Naive thymus-derived CD4-positive, alpha-beta T cell (primary cell): ENCODE measurements at regions of chr1 and their contacts with region 1.

Region 1: GRCh38 chr1:24970399-24970753 is 40.3 kb upstream of the RUNX3 start:
- DNase-seq: no peak
- ATAC-seq: no peak
- H3K4me3 ChIP-seq: no peak overlapping the region
- H3K4me3 Mint-ChIP-seq: peak overlapping the region in 9 of 10 donors; percentile 5 to 78 (median 59)
- H3K27ac ChIP-seq: peak overlapping the region; percentile 35
- H3K27ac Mint-ChIP-seq: peak overlapping the region; percentile 14 to 97 (median 85)
- H3K4me1 ChIP-seq: peaks cover 23 to 47% of the 10 kb centered on the region in 2 donors
- H3K4me1 Mint-ChIP-seq: peaks cover 31 to 81% (median 66%) of the 10 kb centered on the region in 7 donors
- H3K27me3 ChIP-seq: no peaks in the 10 kb centered on the region
- H3K27me3 Mint-ChIP-seq: no peaks in the 10 kb centered on the region

Region 2: GRCh38 chr1:24981631-24982005 is 11.2 kb after region 1 on chr1:
- CTCF ChIA-PET with region 1: interaction called, 4 read pairs
- POLR2A ChIA-PET with region 1: interaction called, 22 read pairs
- intact Hi-C with region 1: loop called (anchors 1 to 2 kb)
- DNase-seq: peak in 3 of 9 donors; percentile 30 to 50 (median 43)
- ATAC-seq: peak; percentile 66
- H3K4me3 ChIP-seq: no peak overlapping the region
- H3K4me3 Mint-ChIP-seq: peak overlapping the region; percentile 49 to 79 (median 60)
- H3K27ac ChIP-seq: peak overlapping the region; percentile 54
- H3K27ac Mint-ChIP-seq: peak overlapping the region; percentile 7 to 92 (median 84)
- H3K4me1 ChIP-seq: peaks cover 47 to 81% of the 10 kb centered on the region in 2 donors
- H3K4me1 Mint-ChIP-seq: peaks cover 78 to 94% (median 92%) of the 10 kb centered on the region in 7 donors
- H3K27me3 ChIP-seq: no peaks in the 10 kb centered on the region
- H3K27me3 Mint-ChIP-seq: no peaks in the 10 kb centered on the region

Region 3: GRCh38 chr1:24987875-24988557 is 17.6 kb after region 1 on chr1:
- CTCF ChIA-PET with region 1: interaction called, 5 read pairs
- POLR2A ChIA-PET with region 1: interaction called, 58 read pairs
- intact Hi-C with region 1: loop called (anchors 1 to 2 kb)
- DNase-seq: no peak
- ATAC-seq: peak; percentile 78
- H3K4me3 ChIP-seq: no peak overlapping the region
- H3K4me3 Mint-ChIP-seq: peak overlapping the region in 8 of 10 donors; percentile 6 to 80 (median 58)
- H3K27ac ChIP-seq: no peak overlapping the region
- H3K27ac Mint-ChIP-seq: peak overlapping the region; percentile 49 to 100 (median 81)
- H3K4me1 ChIP-seq: peaks cover 66 to 96% of the 10 kb centered on the region in 2 donors
- H3K4me1 Mint-ChIP-seq: peaks cover 78 to 99% (median 92%) of the 10 kb centered on the region in 7 donors
- H3K27me3 ChIP-seq: no peaks in the 10 kb centered on the region
- H3K27me3 Mint-ChIP-seq: peaks cover 0 to 10% (median 0%) of the 10 kb centered on the region in 5 donors

Region 4: DNA sequence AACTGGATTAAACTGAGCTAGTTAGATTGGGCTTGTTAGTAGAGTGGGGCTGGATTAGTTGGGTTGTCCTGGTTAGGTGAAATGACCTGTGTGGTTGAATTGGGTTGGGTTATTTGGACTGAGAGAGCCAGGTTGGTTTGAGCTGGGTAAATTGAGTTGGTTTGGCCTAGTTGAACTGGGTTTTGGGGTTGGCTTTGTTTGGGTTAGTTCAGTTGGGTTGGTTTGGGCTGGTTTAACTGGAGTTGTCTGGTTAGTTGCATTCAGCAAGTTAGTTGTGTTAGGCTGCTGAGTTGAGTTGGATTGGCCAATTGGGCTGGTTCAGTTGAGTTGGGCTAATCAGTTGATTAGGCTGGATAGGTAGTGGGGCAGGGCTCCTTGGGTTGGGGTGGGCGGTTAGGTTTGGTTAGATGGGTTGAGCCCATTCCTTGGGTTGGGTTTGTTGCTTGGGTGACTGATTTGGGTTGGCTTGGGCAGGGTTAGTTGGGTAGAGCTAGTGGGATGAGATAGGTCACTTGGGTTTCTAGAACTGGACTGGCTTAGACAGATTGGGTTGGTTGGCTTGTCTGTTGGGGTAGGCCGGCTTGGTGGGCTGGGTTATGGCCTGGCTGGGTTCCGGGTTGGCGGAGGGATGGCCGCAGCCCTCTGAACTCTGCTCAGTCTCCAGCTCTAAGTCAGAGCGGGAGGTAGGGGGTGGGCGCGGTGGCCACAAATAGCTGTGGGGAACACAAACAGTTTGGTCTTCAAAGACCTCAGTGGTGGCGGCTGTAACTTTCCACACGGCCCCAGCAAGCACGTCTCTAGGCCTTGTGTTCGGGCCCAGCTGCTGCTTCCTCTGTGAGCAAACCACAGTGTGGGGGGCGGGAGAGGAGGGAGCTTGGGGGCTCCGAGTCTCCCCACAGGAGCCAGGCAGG is 26.9 kb after region 1 on chr1:
- CTCF ChIA-PET with region 1: interaction called, 5 read pairs
- POLR2A ChIA-PET with region 1: interaction called, 58 read pairs
- intact Hi-C with region 1: loop called (anchors 1 to 2 kb)
- DNase-seq: no peak
- ATAC-seq: peak; percentile 52
- H3K4me3 ChIP-seq: peak overlapping the region; percentile 0
- H3K4me3 Mint-ChIP-seq: peak overlapping the region; percentile 10 to 95 (median 55)
- H3K27ac ChIP-seq: peak overlapping the region; percentile 29
- H3K27ac Mint-ChIP-seq: peak overlapping the region; percentile 67 to 100 (median 86)
- H3K4me1 ChIP-seq: peaks cover 56 to 69% of the 10 kb centered on the region in 2 donors
- H3K4me1 Mint-ChIP-seq: peaks cover 44 to 84% (median 76%) of the 10 kb centered on the region in 7 donors
- H3K27me3 ChIP-seq: no peaks in the 10 kb centered on the region
- H3K27me3 Mint-ChIP-seq: no peaks in the 10 kb centered on the region

Region 5: GRCh38 chr1:25031966-25032667 is 61.7 kb after region 1 on chr1:
- CTCF ChIA-PET with region 1: interaction called, 61 read pairs
- POLR2A ChIA-PET with region 1: interaction called, 12 read pairs
- intact Hi-C with region 1: loop called in 1 of 2 experiments (anchors 1 kb)
- DNase-seq: peak in 7 of 9 donors; percentile 55 to 86 (median 76)
- ATAC-seq: peak; percentile 72
- H3K4me3 ChIP-seq: peak overlapping the region; percentile 0
- H3K4me3 Mint-ChIP-seq: peak overlapping the region; percentile 39 to 92 (median 74)
- H3K27ac ChIP-seq: peak overlapping the region; percentile 77
- H3K27ac Mint-ChIP-seq: peak overlapping the region in 8 of 9 donors; percentile 87 to 97 (median 93)
- H3K4me1 ChIP-seq: peaks cover 72 to 97% of the 10 kb centered on the region in 2 donors
- H3K4me1 Mint-ChIP-seq: peaks cover 56 to 78% (median 74%) of the 10 kb centered on the region in 7 donors
- H3K27me3 ChIP-seq: no peaks in the 10 kb centered on the region
- H3K27me3 Mint-ChIP-seq: no peaks in the 10 kb centered on the region

Region 6: DNA sequence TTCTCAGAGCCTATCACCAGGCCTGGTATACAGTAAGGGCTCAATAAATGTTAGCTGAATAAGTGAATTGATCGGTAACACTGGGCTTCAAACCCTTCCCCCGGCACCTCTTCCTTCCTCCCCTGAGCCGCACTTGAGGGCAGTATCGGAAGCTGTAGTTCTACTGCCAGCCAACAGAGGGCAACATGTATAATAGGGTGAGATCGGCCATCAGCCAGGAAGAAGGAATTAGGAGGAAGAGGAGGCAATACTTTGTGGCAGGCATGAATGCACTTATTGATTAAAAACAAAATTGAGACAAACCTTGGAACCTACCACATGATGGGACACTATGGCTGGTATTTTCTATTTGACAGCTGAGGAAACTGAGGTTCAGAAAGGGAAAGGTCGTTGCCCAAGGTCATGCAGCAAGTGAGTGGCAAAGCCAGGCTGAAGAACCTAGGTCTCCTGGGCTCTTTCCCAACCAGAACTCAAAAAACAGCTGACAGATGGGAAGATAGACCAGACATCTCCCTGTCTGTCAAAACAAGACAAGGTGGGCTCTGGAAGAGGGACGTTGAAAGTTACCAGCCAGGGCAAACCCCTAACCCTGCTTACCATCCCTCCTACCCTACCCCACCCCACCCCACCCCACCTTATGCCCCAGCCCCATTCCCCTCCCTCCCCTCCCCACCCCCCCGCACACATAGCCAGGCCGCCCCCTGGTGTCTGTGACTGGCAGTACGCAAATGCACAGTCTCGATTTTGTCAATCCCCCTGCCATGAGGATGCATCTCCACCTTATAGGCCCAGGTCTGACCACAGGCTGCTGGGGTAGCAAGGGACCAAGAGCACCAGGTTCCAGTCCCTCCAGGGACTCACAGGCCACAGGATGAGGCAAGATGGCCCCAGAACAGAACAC is 67.0 kb after region 1 on chr1:
- CTCF ChIA-PET with region 1: interaction called, 61 read pairs
- POLR2A ChIA-PET with region 1: interaction called, 12 read pairs
- intact Hi-C with region 1: no loop called
- DNase-seq: peak; percentile 39 to 70 (median 56)
- ATAC-seq: peak; percentile 58
- H3K4me3 ChIP-seq: no peak overlapping the region
- H3K4me3 Mint-ChIP-seq: peak overlapping the region in 9 of 10 donors; percentile 1 to 44 (median 17)
- H3K27ac ChIP-seq: no peak overlapping the region
- H3K27ac Mint-ChIP-seq: peak overlapping the region in 8 of 9 donors; percentile 34 to 74 (median 54)
- H3K4me1 ChIP-seq: peaks cover 43 to 57% of the 10 kb centered on the region in 2 donors
- H3K4me1 Mint-ChIP-seq: peaks cover 28 to 42% (median 33%) of the 10 kb centered on the region in 7 donors
- H3K27me3 ChIP-seq: no peaks in the 10 kb centered on the region
- H3K27me3 Mint-ChIP-seq: peaks cover 0 to 12% (median 0%) of the 10 kb centered on the region in 5 donors